CD8-positive, alpha-beta memory T cell (primary cell): ENCODE measurements at regions of chr17 and their contacts with region 1.

Region 1: GRCh38 chr17:67376737-67377487 is at the start of gene PITPNC1:
- DNase-seq: peak; percentile 81 to 91 (median 87)
- H3K4me3 ChIP-seq: peak within 1 kb of the TSS; percentile 93
- H3K4me3 Mint-ChIP-seq: peak within 1 kb of the TSS; percentile 88 to 99 (median 96)
- H3K27ac ChIP-seq: peak within 1 kb of the TSS; percentile 82
- H3K27ac Mint-ChIP-seq: peak within 1 kb of the TSS; percentile 87 to 98 (median 92)
- H3K4me1 ChIP-seq: peaks cover 42% of the 10 kb centered on the region
- H3K4me1 Mint-ChIP-seq: peaks cover 40 to 49% (median 42%) of the 10 kb centered on the region in 3 donors
- H3K27me3 ChIP-seq: no peaks in the 10 kb centered on the region
- H3K27me3 Mint-ChIP-seq: peaks cover 0 to 1% of the 10 kb centered on the region in 2 donors
- total RNA-seq, gene PITPNC1: 43.1 to 45.1 TPM

Region 2: GRCh38 chr17:67359960-67360773 is 16.7 kb before region 1 on chr17:
- CTCF ChIA-PET with region 1: interaction called, 35 read pairs
- POLR2A ChIA-PET with region 1: interaction called, 20 read pairs
- DNase-seq: peak; percentile 30 to 70 (median 62)
- H3K4me3 ChIP-seq: no peak overlapping the region
- H3K4me3 Mint-ChIP-seq: peak overlapping the region; percentile 25 to 71 (median 38)
- H3K27ac ChIP-seq: no peak overlapping the region
- H3K27ac Mint-ChIP-seq: peak overlapping the region; percentile 20 to 93 (median 84)
- H3K4me1 ChIP-seq: peaks cover 52% of the 10 kb centered on the region
- H3K4me1 Mint-ChIP-seq: peaks cover 58 to 88% (median 80%) of the 10 kb centered on the region in 3 donors
- H3K27me3 ChIP-seq: no peaks in the 10 kb centered on the region
- H3K27me3 Mint-ChIP-seq: no peaks in the 10 kb centered on the region

Region 3: DNA sequence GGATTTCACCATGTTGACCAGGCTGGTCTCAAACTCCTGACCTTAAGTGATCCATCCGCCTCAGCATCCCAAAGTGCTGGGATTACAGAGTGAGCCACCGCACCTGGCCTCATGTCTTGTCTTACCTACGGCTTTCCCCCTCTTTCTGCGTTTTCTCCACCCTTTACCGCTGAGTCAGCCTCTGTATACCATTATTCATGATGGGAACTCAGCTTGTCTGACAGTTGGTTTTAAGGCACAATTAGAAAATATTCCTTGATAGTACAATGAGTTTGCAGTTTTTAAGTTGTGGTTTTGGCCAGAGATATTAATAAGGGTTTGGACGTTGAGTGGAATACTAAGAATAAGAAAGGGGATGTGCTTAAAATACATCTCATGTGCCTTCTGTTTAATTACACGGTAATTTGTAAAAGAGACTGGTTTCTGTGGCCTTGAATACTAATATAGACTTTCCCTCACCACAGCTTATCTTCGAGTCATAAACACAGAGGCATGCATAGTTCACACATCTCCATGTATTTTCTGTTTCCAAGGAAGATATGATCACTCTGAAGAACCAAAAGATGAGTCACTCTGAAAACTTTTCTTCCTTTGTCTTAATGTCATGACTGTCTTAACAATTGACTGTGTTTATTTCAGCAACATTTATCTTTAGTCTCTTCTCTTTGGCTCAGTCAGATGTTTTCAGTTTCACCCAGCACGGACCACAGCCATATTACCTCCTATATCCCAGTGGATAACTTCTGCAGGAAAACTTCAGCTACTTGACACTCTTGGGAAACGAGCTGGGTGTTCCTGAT is 54.5 kb after region 1 on chr17:
- CTCF ChIA-PET with region 1: interaction called, 56 read pairs
- POLR2A ChIA-PET with region 1: interaction called, 3 read pairs
- DNase-seq: no peak
- H3K4me3 ChIP-seq: no peak overlapping the region
- H3K4me3 Mint-ChIP-seq: peak overlapping the region in 4 of 7 donors; percentile 0 to 60 (median 14)
- H3K27ac ChIP-seq: no peak overlapping the region
- H3K27ac Mint-ChIP-seq: peak overlapping the region; percentile 44 to 95 (median 83)
- H3K4me1 ChIP-seq: peaks cover 61% of the 10 kb centered on the region
- H3K4me1 Mint-ChIP-seq: peaks cover 66 to 79% (median 72%) of the 10 kb centered on the region in 3 donors
- H3K27me3 ChIP-seq: no peaks in the 10 kb centered on the region
- H3K27me3 Mint-ChIP-seq: peaks cover 0 to 2% of the 10 kb centered on the region in 2 donors

Region 4: GRCh38 chr17:67469208-67469895 is 92.4 kb after region 1 on chr17:
- CTCF ChIA-PET with region 1: interaction called, 269 read pairs
- POLR2A ChIA-PET with region 1: interaction called, 5 read pairs
- DNase-seq: peak in 2 of 5 donors; percentile 34 to 65
- H3K4me3 ChIP-seq: peak overlapping the region; percentile 33
- H3K4me3 Mint-ChIP-seq: peak overlapping the region; percentile 2 to 85 (median 77)
- H3K27ac ChIP-seq: no peak overlapping the region
- H3K27ac Mint-ChIP-seq: peak overlapping the region; percentile 52 to 99 (median 88)
- H3K4me1 ChIP-seq: peaks cover 69% of the 10 kb centered on the region
- H3K4me1 Mint-ChIP-seq: peaks cover 60 to 86% (median 69%) of the 10 kb centered on the region in 3 donors
- H3K27me3 ChIP-seq: no peaks in the 10 kb centered on the region
- H3K27me3 Mint-ChIP-seq: no peaks in the 10 kb centered on the region

Region 5: GRCh38 chr17:67491009-67491680 is 114.2 kb after region 1 on chr17:
- CTCF ChIA-PET with region 1: interaction called, 13 read pairs
- POLR2A ChIA-PET with region 1: interaction called, 10 read pairs
- DNase-seq: no peak
- H3K4me3 ChIP-seq: no peak overlapping the region
- H3K4me3 Mint-ChIP-seq: peak overlapping the region; percentile 48 to 87 (median 65)
- H3K27ac ChIP-seq: no peak overlapping the region
- H3K27ac Mint-ChIP-seq: peak overlapping the region; percentile 43 to 94 (median 74)
- H3K4me1 ChIP-seq: peaks cover 48% of the 10 kb centered on the region
- H3K4me1 Mint-ChIP-seq: peaks cover 85 to 93% (median 87%) of the 10 kb centered on the region in 3 donors
- H3K27me3 ChIP-seq: no peaks in the 10 kb centered on the region
- H3K27me3 Mint-ChIP-seq: no peaks in the 10 kb centered on the region

Region 6: DNA sequence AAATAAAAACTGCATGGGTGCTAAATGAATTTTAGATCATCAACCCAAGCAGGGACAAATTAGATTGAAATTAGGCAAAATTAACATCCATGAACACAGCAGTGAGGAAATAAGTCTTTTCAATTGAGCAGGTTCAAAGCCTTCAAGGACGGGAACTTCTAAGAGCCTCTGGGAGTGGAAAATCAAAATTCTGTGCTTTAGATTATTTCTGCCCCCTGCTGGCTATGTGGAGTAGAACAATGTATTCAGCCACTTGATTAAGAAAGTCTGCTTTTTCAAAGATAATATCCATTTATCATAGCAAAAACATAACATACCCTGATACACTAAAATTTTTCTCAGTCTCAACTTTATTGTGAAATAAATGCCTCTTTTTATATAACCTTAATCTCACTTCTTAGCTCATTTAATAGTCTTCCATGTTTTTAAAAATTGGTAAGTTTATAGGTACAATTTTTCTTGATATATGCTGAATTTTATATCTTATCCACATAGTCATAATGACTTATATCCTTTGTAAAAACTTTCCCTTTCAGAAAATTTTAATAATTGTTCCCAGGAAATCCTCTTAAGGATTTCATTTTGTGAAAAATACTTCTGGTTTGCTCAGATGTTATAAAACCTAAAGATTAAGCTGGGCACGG is 312.7 kb after region 1 on chr17:
- CTCF ChIA-PET with region 1: interaction called, 34 read pairs
- POLR2A ChIA-PET with region 1: no interaction called
- DNase-seq: peak; percentile 3 to 63 (median 49)
- H3K4me3 ChIP-seq: no peak overlapping the region
- H3K4me3 Mint-ChIP-seq: no peak overlapping the region
- H3K27ac ChIP-seq: no peak overlapping the region
- H3K27ac Mint-ChIP-seq: peak overlapping the region in 3 of 8 donors; percentile 3 to 54 (median 12)
- H3K4me1 ChIP-seq: peaks cover 4% of the 10 kb centered on the region
- H3K4me1 Mint-ChIP-seq: peaks cover 0 to 5% (median 5%) of the 10 kb centered on the region in 3 donors
- H3K27me3 ChIP-seq: no peaks in the 10 kb centered on the region
- H3K27me3 Mint-ChIP-seq: peaks cover 0 to 1% of the 10 kb centered on the region in 2 donors